ENCODE measurements at regions of chr10 and their contacts with region 1.

Region 1: GRCh38 chr10:71812016-71812912 is 38.8 kb downstream of the PSAP start:
- DNase-seq: peak; percentile 61 to 82
- ATAC-seq: peak; percentile 61 to 89
- H3K4me3 ChIP-seq: no peak overlapping the region
- H3K27ac ChIP-seq: peak overlapping the region in 1 of 2 experiments; percentile 43; a peak in 3 of 6 replicates
- H3K4me1 ChIP-seq: peaks cover 18% of the 10 kb centered on the region; the same call in 2 of the 3 replicates
- CTCF ChIP-seq: peak; percentile 87
- EP300 ChIP-seq: no peak
- POLR2A ChIP-seq: no peak
- RAD21 ChIP-seq: peak; percentile 89 to 91

Region 2: DNA sequence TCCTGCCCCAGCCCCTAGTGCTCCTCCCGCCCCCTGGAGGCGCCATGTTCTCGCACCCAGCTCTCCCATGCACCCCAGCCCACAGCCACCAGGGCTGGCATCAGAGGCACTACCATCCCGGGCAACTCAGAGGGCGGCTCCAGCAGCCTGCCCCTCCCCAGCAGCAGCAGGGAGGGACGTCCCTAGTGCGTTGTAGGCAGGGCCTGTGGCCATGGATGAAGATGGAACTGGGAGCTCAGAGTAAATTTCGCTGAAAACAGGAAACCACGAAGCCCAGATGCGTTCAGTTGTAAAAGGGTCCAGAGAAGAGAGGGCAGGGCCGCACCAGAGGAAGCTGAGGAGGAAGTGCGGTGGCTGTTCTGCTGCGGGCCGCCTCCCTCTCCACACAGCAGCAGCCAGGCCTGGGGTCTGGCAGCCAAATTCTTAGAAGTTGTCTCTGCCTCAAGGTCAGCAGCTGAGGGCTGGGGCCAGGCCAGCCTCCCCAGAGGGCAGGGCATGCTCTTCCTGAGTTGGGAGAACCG is 63.5 kb before region 1 on chr10:
- CTCF ChIA-PET with region 1: no interaction called
- POLR2A ChIA-PET with region 1: no interaction called
- DNase-seq: no peak
- ATAC-seq: peak in 1 of 2 experiments; percentile 8; a peak in 2 of 6 replicates
- H3K4me3 ChIP-seq: no peak overlapping the region
- H3K27ac ChIP-seq: no peak overlapping the region
- H3K4me1 ChIP-seq: peaks cover 13% of the 10 kb centered on the region
- CTCF ChIP-seq: no peak
- EP300 ChIP-seq: no peak
- POLR2A ChIP-seq: no peak
- RAD21 ChIP-seq: no peak

Region 3: DNA sequence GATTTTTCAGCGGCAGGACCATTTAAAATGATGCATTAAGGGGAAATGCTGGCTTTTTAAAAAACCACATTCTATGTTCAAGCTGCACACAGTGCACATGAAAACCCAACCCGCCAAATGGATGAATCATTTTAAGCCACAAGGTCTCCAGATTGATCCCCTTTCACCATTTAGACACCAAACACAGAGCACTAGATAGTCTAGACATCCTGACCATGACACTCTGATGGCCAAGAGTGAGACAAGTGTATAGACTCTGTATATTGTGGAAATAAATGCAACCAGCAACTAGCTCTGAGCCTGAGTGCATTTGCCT is 10.1 kb after region 1 on chr10:
- CTCF ChIA-PET with region 1: interaction called, 71 read pairs
- POLR2A ChIA-PET with region 1: no interaction called
- DNase-seq: no peak
- ATAC-seq: no peak
- H3K4me3 ChIP-seq: no peak overlapping the region
- H3K27ac ChIP-seq: no peak overlapping the region
- H3K4me1 ChIP-seq: no peaks in the 10 kb centered on the region
- CTCF ChIP-seq: no peak
- EP300 ChIP-seq: no peak
- POLR2A ChIP-seq: no peak
- RAD21 ChIP-seq: no peak

Region 4: GRCh38 chr10:71829171-71829570 is 16.9 kb after region 1 on chr10:
- CTCF ChIA-PET with region 1: interaction called, 71 read pairs
- POLR2A ChIA-PET with region 1: no interaction called
- DNase-seq: no peak
- ATAC-seq: no peak
- H3K4me3 ChIP-seq: no peak overlapping the region
- H3K27ac ChIP-seq: no peak overlapping the region
- H3K4me1 ChIP-seq: peaks cover 18% of the 10 kb centered on the region
- CTCF ChIP-seq: no peak
- EP300 ChIP-seq: no peak
- POLR2A ChIP-seq: no peak
- RAD21 ChIP-seq: no peak